MCF 10A (cell line): ENCODE measurements at regions of chr11 and their contacts with region 1.

Region 1: GRCh38 chr11:9613118-9613829 is 39.8 kb downstream of the WEE1 start:
- DNase-seq: peak; percentile 94
- H3K4me3 Mint-ChIP-seq: peak overlapping the region; percentile 77
- H3K27ac Mint-ChIP-seq: peak overlapping the region; percentile 97
- H3K4me1 Mint-ChIP-seq: peaks cover 35% of the 10 kb centered on the region
- H3K27me3 Mint-ChIP-seq: no peaks in the 10 kb centered on the region
- CTCF ChIP-seq: peak; percentile 92

Region 2: GRCh38 chr11:9565822-9566560 is 47.3 kb before region 1 on chr11:
- CTCF ChIA-PET with region 1: interaction called, 5 read pairs
- POLR2A ChIA-PET with region 1: interaction called, 40 read pairs
- intact Hi-C with region 1: no loop called
- DNase-seq: peak; percentile 99
- H3K4me3 Mint-ChIP-seq: no peak overlapping the region
- H3K27ac Mint-ChIP-seq: peak overlapping the region; percentile 100
- H3K4me1 Mint-ChIP-seq: peaks cover 43% of the 10 kb centered on the region
- H3K27me3 Mint-ChIP-seq: no peaks in the 10 kb centered on the region
- CTCF ChIP-seq: no peak

Region 3: DNA sequence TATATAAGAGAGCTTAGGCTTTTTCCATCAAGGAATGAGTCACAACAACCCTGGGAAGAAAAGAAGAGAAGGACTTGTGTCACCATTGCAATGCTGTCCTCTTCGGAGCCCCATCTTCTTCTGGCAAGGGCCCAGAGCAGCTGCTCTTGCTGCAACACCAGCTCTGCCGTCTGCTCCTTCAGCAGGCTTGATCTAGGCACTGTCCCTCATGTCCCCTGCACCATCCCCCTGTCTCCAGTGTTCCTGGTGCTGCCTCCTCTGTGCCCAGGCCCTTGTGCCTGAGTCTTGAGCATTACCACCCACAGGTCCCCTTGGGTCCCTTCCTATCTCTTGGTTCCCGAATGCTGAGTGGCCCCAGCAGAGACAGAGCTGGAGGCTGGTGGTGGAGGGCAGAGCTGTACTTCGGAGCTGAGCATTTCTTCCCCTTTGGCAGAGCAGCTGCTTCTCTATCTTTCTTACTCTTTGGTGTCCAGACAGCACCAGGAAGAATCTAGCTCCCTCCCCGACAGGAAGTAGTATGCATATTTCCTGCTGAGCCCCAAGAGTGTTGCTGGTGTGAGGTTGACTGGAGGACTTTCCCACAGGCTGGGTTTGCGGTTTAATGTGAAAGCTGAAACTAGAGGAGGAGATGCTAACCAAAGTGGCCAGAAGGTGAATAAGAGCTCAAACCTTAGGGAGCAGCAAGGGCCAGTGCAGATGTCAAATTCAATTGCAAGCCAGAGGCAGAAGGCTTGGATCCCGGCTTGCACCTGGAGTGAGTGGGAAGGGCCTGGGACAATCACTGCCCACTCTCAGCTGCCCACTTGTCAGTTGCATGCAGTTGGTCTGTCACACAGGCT is 12.0 kb before region 1 on chr11:
- CTCF ChIA-PET with region 1: interaction called, 26 read pairs
- POLR2A ChIA-PET with region 1: interaction called, 6 read pairs
- intact Hi-C with region 1: no loop called
- DNase-seq: peak; percentile 27
- H3K4me3 Mint-ChIP-seq: no peak overlapping the region
- H3K27ac Mint-ChIP-seq: no peak overlapping the region
- H3K4me1 Mint-ChIP-seq: peaks cover 9% of the 10 kb centered on the region
- H3K27me3 Mint-ChIP-seq: no peaks in the 10 kb centered on the region
- CTCF ChIP-seq: no peak

Region 4: GRCh38 chr11:9748361-9748970 is 135.2 kb after region 1 on chr11:
- CTCF ChIA-PET with region 1: interaction called, 44 read pairs
- POLR2A ChIA-PET with region 1: interaction called, 35 read pairs
- intact Hi-C with region 1: loop called (anchors 1 kb)
- DNase-seq: peak; percentile 75
- H3K4me3 Mint-ChIP-seq: no peak overlapping the region
- H3K27ac Mint-ChIP-seq: no peak overlapping the region
- H3K4me1 Mint-ChIP-seq: peaks cover 6% of the 10 kb centered on the region
- H3K27me3 Mint-ChIP-seq: no peaks in the 10 kb centered on the region
- CTCF ChIP-seq: peak; percentile 90

Region 5: DNA sequence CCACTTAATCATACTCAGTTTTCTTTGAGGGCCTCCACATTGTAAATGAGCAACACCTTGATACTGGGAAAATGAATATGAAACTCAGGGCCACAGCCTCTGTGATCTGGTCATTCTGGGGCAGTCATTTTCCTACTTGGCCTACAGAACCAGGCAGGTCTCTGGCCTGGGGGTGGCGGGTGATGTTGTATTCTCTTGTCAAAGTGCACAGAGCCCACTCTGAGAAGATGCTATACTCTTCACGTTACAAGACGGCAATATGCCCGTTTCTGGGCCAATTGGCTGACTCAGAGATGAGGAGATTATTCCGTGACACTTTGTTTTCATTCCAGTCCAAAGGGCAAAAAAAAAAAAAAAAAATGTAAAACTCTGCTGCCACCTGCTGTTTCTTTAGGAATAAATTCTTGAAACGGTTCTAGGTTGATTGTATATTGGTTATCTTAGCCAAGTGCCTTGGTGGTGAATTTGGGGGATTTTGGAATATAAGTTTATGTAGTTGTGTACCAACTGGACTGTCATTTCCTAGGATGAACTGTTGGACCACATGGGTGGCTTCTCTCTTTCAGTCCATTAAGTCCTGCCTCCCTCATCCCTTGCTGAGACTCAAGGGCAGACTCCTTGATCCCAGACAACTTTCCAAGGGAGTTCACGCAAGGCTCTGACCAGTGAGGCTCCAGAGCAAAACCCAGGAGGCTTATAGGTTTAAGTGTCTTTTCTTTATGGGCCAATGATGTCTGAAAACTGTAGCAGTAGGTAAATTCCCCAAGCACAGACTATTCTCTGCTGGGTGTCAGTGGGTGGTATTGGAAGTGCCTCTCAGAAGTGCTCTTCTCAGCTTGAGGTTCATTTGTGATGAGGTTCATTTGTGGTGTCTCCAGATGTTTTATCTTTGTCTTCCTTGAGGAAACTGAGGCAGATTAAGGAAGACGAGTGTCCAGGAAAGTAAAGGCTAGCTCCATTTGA is 709.8 kb after region 1 on chr11:
- CTCF ChIA-PET with region 1: no interaction called
- POLR2A ChIA-PET with region 1: no interaction called
- intact Hi-C with region 1: loop called (anchors 5 kb)
- DNase-seq: peak; percentile 87
- H3K4me3 Mint-ChIP-seq: no peak overlapping the region
- H3K27ac Mint-ChIP-seq: peak overlapping the region; percentile 54
- H3K4me1 Mint-ChIP-seq: peaks cover 20% of the 10 kb centered on the region
- H3K27me3 Mint-ChIP-seq: no peaks in the 10 kb centered on the region
- CTCF ChIP-seq: peak; percentile 43